Colonic mucosa (tissue), 4 donors: ENCODE measurements at regions of chr11 and their contacts with region 1.

Region 1: DNA sequence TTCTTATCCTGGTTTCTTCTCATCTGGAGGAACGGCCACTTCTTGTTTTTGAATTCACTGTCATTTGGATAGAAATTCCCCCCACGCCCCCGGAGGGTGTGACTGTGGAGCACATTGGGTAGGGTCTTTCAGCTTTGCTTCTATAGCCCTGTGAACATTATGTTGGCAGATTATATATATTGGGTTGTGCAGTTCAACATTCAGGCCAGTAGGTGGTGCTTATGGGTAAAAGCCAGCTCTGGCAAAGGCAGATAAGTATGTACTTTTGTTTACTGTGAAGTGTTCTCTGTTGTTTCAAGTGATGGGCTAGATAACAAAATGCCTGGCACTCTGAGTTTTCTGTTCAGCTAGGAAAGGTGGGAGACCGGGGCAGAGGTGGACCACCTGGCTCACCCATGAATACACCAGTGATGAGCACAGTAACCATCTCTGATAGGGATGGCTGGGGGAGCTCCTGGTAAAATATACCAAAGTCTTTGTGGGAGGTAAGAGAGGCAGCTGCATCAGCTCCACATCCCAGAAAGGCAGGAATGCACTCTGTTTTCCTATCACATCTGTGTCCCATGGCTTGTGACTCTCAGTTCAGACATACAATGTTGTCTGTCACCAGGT is 1348.2 kb upstream of the RAG2 start:
- DNase-seq: peak; percentile 19
- H3K4me3 ChIP-seq: no peak overlapping the region
- H3K27ac ChIP-seq: no peak overlapping the region
- H3K4me1 ChIP-seq: no peaks in the 10 kb centered on the region
- H3K27me3 ChIP-seq: no peaks in the 10 kb centered on the region
- CTCF ChIP-seq: peak; percentile 51

Region 2: GRCh38 chr11:37605224-37605623 is 341.0 kb before region 1 on chr11:
- intact Hi-C with region 1: no loop called
- DNase-seq: no peak
- H3K4me3 ChIP-seq: no peak overlapping the region
- H3K27ac ChIP-seq: no peak overlapping the region
- H3K4me1 ChIP-seq: no peaks in the 10 kb centered on the region
- H3K27me3 ChIP-seq: no peaks in the 10 kb centered on the region
- CTCF ChIP-seq: no peak

Region 3: GRCh38 chr11:37905707-37906417 is 40.4 kb before region 1 on chr11:
- intact Hi-C with region 1: no loop called
- DNase-seq: no peak
- H3K4me3 ChIP-seq: no peak overlapping the region
- H3K27ac ChIP-seq: no peak overlapping the region
- H3K4me1 ChIP-seq: no peaks in the 10 kb centered on the region
- H3K27me3 ChIP-seq: no peaks in the 10 kb centered on the region
- CTCF ChIP-seq: no peak

Region 4: GRCh38 chr11:39374963-39375698 is 1428.9 kb after region 1 on chr11:
- intact Hi-C with region 1: loop called (anchors 10 kb)
- DNase-seq: no peak
- H3K4me3 ChIP-seq: no peak overlapping the region
- H3K27ac ChIP-seq: no peak overlapping the region
- H3K4me1 ChIP-seq: no peaks in the 10 kb centered on the region
- H3K27me3 ChIP-seq: no peaks in the 10 kb centered on the region
- CTCF ChIP-seq: peak; percentile 52